HAP-1 (cell line): ENCODE measurements at regions of chr17 and their contacts with region 1.

Region 1: DNA sequence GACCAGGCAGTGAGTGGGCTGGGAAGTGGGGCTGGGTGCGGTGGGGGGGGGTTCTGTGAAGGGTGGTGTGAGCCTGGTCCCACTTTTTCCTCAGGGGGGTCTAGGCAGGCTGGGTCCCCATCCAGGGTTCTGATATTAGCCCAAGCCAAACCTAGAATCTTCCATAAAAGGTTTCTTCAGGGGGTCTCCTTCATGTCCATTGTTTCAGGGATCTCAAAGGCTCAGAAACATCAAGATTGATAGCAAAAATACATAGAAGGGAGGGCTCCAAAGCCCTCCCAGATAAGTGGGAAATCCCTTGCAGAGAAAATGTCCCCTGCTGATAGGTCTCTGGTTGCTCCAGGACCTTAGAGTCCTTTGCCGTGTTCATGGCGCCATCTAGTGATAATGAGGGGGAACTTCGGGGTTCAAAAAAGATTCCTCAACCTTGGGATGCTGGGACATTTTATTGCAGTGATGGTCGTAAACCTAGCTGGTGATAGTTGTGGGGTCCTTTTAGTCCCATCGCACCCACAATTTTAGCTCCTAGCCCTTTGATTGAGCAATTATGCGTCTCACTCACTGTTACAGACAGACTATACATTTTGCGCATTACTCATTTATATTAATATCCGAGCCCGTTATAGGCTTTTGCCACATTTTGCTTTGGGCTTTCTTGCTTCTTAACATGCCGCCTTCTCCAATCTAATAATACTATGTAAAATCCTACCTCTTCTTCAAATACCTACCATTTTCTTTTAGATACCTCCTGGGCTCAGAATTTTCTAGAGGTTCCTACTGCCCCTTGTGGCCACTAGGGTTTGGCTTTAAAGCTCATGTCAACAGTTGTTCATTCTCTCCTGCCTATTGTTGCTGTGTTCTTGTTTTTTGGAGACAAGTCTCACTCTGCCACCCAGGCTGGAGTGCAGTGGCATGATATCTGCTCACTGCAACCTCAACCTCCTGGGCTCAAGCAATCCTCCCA is 35.1 kb downstream of the IGF2BP1 start:
- DNase-seq: peak; percentile 73 to 76
- H3K4me3 ChIP-seq: no peak overlapping the region
- H3K4me1 ChIP-seq: peaks cover 4% of the 10 kb centered on the region; the same call in 1 of the 2 replicates
- H3K27me3 ChIP-seq: no peaks in the 10 kb centered on the region

Region 2: DNA sequence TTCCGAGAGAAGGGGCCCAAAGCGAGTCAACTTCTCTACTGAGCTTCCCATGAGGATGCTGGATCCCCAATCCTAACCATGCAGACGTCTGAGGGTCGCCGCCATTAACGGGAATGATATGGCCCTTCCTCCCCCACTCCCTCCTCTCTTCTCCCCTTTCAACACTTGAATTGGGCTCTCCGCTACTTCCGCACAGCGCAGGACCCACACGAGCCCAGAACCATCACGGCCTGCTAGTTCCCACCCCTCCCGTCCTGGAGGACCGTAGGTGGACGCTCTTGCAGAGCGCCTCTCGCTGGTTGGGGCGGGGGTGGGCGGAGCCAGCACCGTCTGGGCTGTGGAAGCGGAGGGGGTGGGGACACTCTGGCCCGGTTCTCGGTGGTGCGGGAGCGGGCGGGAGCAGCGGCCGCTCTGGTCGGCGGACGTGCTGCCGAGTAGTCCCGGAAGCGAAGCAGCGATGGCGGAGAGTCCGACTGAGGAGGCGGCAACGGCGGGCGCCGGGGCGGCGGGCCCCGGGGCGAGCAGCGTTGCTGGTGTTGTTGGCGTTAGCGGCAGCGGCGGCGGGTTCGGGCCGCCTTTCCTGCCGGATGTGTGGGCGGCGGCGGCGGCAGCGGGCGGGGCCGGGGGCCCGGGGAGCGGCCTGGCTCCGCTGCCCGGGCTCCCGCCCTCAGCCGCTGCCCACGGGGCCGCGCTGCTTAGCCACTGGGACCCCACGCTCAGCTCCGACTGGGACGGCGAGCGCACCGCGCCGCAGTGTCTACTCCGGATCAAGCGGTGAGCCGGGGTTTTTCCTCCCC is 124.0 kb before region 1 on chr17 and contains the start of gene UBE2Z:
- in situ Hi-C with region 1: no loop called
- DNase-seq: peak; percentile 84 to 96
- H3K4me3 ChIP-seq: peak within 1 kb of the TSS; percentile 45
- H3K4me1 ChIP-seq: peaks cover 15% of the 10 kb centered on the region
- H3K27me3 ChIP-seq: no peaks in the 10 kb centered on the region

Region 3: DNA sequence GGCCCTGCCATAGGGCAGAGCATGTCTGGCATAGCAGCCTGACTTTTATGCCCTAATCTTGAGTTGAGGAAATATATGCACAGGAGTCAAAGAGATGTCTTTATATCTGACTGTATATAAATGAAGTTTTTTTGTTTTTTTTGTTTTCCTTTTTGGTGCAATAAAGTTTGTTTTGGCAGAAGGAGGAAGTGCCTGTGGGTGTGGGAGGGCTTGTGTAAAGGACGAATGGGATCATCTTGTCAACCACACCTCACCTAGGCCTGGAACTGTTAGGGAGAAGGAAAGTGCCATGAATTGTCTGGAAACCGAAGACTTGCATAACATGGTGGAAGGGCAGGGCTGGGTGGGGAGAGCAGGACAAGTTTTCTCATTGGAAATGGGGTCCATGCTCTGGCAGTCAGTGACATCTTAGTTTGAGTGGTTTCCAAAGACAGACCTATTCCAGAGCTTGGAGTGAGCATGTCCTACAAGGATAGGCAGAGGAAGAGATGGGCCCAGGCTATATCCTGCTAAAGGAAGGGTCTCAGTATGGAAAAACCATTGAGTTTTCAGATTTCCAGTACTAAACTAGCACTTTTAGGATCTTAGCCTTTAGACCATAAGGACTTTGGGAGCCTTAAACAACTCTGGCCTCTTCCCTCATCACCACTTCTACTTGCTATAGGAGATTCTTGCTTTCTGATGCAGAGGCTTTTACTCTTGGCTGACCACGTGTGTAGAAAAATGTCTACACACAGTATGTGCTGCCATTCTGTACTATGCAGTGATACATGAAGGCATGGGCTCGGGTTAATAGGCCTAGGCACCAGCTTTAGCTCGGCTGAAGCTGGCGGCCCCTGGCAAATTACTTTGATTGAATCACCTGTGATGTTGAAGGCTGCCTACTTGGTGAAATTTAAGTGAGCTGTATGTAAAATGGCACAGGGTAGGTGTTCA is 103.1 kb before region 1 on chr17:
- in situ Hi-C with region 1: loop called (anchors 10 kb)
- DNase-seq: no peak
- H3K4me3 ChIP-seq: no peak overlapping the region
- H3K4me1 ChIP-seq: no peaks in the 10 kb centered on the region
- H3K27me3 ChIP-seq: no peaks in the 10 kb centered on the region

Region 4: GRCh38 chr17:48970224-48970623 is 62.0 kb before region 1 on chr17:
- in situ Hi-C with region 1: no loop called
- DNase-seq: peak in 1 of 2 experiments; percentile 62
- H3K4me3 ChIP-seq: no peak overlapping the region
- H3K4me1 ChIP-seq: peaks cover 5% of the 10 kb centered on the region; the same call in 1 of the 2 replicates
- H3K27me3 ChIP-seq: no peaks in the 10 kb centered on the region; the same call in 1 of the 2 replicates

Region 5: DNA sequence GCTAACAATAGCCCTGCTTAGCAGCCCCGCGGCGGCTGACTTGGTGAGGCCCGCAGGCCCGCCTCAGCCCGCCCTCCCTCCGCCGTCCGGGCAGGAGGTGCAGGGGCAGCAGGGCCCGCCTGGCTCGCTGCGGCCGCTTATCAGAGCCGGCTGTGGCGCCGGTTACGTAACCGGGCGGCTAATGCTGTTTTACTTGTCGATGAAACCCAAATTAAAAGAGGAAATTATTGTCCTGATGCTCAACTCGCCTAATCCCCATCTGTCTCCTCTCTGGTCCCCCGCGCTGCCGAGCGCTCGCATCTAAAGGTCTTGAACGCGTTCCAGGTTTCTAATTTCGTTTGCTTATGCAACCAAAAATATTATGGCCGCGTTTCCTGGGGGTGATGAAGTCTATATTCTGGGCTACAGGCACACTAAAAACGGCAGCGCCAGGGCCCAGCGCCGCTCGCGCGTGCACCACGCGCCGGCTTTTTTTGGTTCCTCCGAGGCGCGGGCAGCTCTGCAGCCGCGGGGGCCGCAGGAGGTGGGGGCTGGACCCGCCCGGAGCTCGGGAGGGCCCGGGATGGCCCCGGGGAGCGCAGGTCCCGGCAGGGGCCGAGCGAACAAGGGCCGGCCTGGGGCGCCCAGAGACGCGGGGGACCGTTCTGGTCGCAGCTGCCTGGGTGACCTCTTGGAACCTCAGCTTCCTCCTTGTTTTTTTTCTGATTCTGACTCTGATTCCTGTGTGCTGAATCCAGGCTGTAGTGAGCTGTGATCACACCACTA is 1899.1 kb after region 1 on chr17:
- in situ Hi-C with region 1: no loop called
- DNase-seq: peak; percentile 50 to 84
- H3K4me3 ChIP-seq: peak overlapping the region; percentile 15
- H3K4me1 ChIP-seq: peaks cover 10% of the 10 kb centered on the region
- H3K27me3 ChIP-seq: no peaks in the 10 kb centered on the region